HEK293T (cell line): ENCODE measurements at regions of chr5 and their contacts with region 1.

Region 1: DNA sequence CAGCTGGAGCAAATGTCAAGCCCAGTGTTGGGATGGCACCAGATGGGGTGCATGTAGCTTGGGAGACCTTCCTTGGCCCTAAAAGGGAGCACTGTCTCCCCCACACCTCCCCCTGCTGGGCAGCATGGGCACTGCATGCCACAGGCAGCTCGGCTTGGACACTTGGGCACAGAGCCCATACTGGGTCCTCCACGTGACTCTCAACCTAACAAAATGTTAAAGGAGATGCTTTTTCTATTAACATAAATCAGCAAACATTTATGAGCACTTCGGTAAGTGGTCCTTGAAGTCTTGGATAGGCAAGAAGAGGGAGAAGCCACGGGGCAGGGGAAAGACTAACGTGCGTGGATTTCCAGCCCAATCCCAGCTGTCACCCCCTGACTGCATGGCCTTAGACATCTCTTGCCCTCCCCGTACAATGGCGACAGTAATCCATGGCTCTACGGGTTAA is 23.9 kb upstream of the MAPK9 start:
- DNase-seq: peak; percentile 82

Region 2: GRCh38 chr5:180304431-180305375 is 11.1 kb before region 1 on chr5:
- CTCF ChIA-PET with region 1: interaction called, 14 read pairs
- POLR2A ChIA-PET with region 1: interaction called, 3 read pairs
- DNase-seq: no peak

Region 3: GRCh38 chr5:180328296-180329137 is 12.7 kb after region 1 on chr5:
- CTCF ChIA-PET with region 1: interaction called, 23 read pairs
- POLR2A ChIA-PET with region 1: interaction called, 4 read pairs
- DNase-seq: peak; percentile 92